Activated CD8-positive, alpha-beta T cell treated with anti-CD3 and anti-CD28 coated beads, Interleukin-2, amount 10 ng/mL, durations not matched to agents 7 days and 5 days (primary cell): ENCODE measurements at regions of chr15 and their contacts with region 1.

Region 1: DNA sequence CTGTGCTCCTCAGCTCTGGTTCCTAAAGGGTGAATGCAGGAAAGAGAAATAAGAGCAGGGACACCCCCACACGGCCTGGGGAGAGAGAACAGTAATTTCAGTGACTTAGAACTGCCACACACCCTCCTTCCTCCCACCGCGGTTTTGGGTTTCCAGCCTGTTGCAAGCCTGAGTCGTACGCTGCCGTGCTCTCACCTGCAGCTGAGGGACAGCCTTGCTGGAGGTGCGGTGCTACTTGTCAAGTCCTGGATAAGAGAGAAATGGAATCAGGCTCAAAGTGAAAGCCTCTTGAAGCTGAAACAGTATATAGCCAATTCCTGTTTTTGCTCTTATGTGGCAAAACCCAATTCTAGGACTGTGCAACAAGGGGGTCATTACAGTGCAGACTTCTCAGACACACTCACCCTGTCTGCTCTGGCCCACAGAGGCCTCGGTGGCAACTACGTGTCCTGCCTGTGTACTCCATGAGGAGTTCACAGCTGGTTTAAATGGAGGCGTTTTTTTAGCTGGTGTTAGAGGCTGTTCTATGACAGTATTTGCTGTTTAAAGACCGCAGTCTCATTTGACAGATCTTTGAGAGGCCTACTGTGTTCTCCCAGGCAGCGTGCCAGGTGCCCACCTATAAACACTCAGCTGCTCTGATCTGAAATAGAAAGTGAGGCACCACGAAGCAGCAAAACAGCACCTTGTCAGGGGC is 42.9 kb downstream of the TBC1D2B start:
- DNase-seq: peak; percentile 90
- ATAC-seq: peak; percentile 91
- H3K4me3 Mint-ChIP-seq: peak overlapping the region; percentile 64
- H3K27ac Mint-ChIP-seq: peak overlapping the region; percentile 79
- H3K4me1 Mint-ChIP-seq: peaks cover 88% of the 10 kb centered on the region
- H3K27me3 Mint-ChIP-seq: no peaks in the 10 kb centered on the region

Region 2: DNA sequence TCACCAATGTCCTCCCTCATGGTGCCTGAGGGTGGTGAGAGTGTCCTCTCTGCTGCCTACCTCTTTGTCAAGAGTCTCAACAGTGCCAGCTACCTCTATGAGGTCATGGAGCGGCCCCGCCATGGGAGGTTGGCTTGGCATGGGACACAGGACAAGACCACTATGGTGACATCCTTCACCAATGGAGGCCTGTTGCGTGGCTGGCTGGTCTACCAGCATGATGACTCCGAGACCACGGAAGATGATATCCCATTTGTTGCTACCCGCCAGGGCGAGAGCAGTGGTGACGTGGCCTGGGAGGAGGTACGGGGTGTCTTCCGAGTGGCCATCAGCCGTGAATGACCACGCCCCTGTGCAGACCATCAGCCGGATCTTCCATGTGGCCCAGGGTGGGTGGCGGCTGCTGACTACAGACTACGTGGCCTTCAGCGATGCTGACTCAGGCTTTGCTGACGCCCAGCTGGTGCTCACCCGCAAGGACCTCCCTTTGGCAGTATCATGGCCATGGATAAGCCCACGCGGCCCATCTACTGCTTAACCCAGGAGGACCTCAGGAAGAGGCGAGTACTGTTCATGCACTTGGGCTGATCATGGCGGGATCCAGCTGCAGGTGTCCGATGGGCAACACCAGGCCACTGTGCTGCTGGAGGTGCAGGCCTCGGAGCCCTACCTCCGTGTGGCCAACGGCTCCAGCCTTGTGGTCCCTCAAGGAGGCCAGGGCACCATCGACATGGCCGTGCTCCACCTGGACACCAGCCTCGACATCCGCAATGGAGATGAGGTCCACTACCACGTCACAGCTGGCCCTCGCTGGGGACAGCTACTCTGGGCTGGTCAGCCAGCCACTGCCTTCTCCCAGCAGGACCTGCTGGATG is 135.9 kb before region 1 on chr15:
- CTCF ChIA-PET with region 1: no interaction called
- POLR2A ChIA-PET with region 1: no interaction called
- DNase-seq: no peak
- ATAC-seq: no peak
- H3K4me3 Mint-ChIP-seq: no peak overlapping the region
- H3K27ac Mint-ChIP-seq: no peak overlapping the region
- H3K4me1 Mint-ChIP-seq: no peaks in the 10 kb centered on the region
- H3K27me3 Mint-ChIP-seq: no peaks in the 10 kb centered on the region

Region 3: DNA sequence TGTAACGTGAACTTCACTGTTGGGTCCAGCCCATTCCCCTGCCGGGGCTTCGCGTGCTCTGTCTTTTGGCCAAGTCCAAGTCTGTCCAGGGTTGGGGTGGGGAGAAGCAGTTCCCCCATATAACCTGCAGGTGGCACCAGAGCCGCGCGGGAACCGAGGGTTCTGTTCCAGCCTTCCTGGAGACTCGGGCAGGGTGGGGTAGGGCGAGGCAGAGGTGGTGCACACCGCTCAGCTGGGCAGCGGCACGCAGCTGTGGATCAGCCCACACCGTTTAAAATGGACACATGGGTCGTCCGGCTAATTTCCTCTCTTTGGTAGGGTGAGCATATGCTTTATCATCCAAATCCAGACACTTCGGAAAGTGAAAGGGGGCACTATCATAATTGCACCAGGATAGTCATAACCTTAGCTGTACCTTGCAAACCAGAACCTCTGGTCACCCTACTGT is 75.2 kb before region 1 on chr15:
- CTCF ChIA-PET with region 1: interaction called, 14 read pairs
- POLR2A ChIA-PET with region 1: no interaction called
- DNase-seq: peak; percentile 84
- ATAC-seq: peak; percentile 99
- H3K4me3 Mint-ChIP-seq: peak overlapping the region; percentile 39
- H3K27ac Mint-ChIP-seq: no peak overlapping the region
- H3K4me1 Mint-ChIP-seq: peaks cover 19% of the 10 kb centered on the region
- H3K27me3 Mint-ChIP-seq: peaks cover 27% of the 10 kb centered on the region

Region 4: DNA sequence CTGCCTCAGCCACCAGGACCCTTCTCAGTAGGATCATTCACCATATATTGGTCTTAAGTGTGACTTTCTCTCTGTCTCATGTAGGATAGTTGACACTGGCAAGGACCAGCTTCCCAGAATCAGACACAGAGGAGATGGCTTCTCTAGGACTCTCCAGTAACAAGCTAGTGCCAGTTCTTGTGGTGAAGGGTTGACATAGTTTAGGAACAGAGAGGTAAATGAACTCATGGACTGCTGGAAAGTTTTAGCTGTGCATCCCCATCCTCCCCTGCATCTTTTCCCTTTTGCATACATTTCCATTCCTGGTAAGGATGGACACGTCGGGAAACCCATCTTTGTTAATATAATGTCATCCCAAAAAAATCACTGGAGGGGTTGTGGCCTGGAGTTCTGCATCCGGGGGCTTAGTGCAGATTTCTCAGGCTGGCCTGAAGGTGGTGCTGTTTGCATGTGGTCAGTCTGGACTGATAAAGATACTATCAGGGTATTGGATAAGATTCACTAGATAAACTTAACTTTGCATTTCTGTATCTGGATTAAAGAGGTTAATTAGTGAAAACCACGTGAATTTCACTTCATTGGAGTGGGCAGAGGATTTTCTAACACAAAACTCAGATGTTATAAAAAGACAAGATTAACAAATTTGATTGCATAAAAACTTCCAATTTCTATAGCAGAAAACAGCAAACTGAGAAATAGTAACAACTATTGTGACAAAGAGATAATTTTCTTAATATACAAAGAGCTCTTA is 67.9 kb before region 1 on chr15:
- CTCF ChIA-PET with region 1: interaction called, 10 read pairs
- POLR2A ChIA-PET with region 1: no interaction called
- DNase-seq: peak; percentile 66
- ATAC-seq: peak; percentile 49
- H3K4me3 Mint-ChIP-seq: no peak overlapping the region
- H3K27ac Mint-ChIP-seq: no peak overlapping the region
- H3K4me1 Mint-ChIP-seq: peaks cover 17% of the 10 kb centered on the region
- H3K27me3 Mint-ChIP-seq: peaks cover 28% of the 10 kb centered on the region

Region 5: GRCh38 chr15:78018946-78019644 is 15.5 kb before region 1 on chr15:
- CTCF ChIA-PET with region 1: interaction called, 25 read pairs
- POLR2A ChIA-PET with region 1: interaction called, 6 read pairs
- DNase-seq: peak; percentile 60
- ATAC-seq: peak; percentile 88
- H3K4me3 Mint-ChIP-seq: peak overlapping the region; percentile 22
- H3K27ac Mint-ChIP-seq: peak overlapping the region; percentile 75
- H3K4me1 Mint-ChIP-seq: peaks cover 34% of the 10 kb centered on the region
- H3K27me3 Mint-ChIP-seq: no peaks in the 10 kb centered on the region

Region 6: DNA sequence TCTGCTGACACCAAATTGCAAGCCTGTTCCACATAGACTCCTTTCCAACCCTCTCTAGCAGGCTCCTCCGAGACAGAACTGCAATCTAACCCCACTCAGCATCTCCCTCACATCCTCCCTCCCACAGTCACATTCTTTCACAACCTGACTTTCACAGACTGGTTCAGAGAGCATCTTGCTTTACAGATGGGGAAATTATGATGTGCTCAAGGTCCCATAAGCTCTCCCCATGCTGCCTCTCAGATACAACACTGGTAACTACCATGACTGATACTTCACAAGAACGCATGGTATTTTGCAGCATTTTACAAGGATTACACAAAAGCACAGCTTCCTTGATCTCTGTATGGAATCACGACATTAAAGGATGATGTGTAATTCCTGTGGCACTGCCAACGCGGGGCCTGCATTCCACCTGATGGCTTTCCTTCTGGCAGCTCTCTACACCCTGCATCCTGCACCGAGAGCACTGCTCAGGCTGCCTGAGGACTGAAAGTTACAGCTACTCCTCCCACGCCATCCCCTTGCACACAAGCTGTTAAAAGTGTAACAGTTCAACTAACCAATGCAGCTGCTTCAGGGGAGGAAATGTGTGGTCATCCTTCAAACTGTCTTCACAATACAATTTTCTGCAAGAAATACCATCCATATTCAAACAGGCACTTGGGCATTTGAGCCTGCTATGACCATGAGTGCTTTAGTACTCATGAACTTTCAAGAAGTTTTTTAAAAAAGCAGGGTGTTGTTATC is 15.2 kb after region 1 on chr15:
- CTCF ChIA-PET with region 1: interaction called, 46 read pairs
- POLR2A ChIA-PET with region 1: interaction called, 53 read pairs
- DNase-seq: peak; percentile 80
- ATAC-seq: peak; percentile 80
- H3K4me3 Mint-ChIP-seq: peak overlapping the region; percentile 60
- H3K27ac Mint-ChIP-seq: peak overlapping the region; percentile 94
- H3K4me1 Mint-ChIP-seq: peaks cover 94% of the 10 kb centered on the region
- H3K27me3 Mint-ChIP-seq: no peaks in the 10 kb centered on the region

Region 7: GRCh38 chr15:78065284-78065872 is 30.7 kb after region 1 on chr15:
- CTCF ChIA-PET with region 1: interaction called, 64 read pairs
- POLR2A ChIA-PET with region 1: interaction called, 21 read pairs
- DNase-seq: no peak
- ATAC-seq: peak; percentile 18
- H3K4me3 Mint-ChIP-seq: no peak overlapping the region
- H3K27ac Mint-ChIP-seq: no peak overlapping the region
- H3K4me1 Mint-ChIP-seq: peaks cover 10% of the 10 kb centered on the region
- H3K27me3 Mint-ChIP-seq: no peaks in the 10 kb centered on the region

Region 8: GRCh38 chr15:78077058-78077877 is 42.6 kb after region 1 on chr15 and contains the start of gene TBC1D2B:
- CTCF ChIA-PET with region 1: interaction called, 64 read pairs
- POLR2A ChIA-PET with region 1: interaction called, 21 read pairs
- DNase-seq: peak; percentile 69
- ATAC-seq: peak; percentile 83
- H3K4me3 Mint-ChIP-seq: peak within 1 kb of the TSS; percentile 100
- H3K27ac Mint-ChIP-seq: peak within 1 kb of the TSS; percentile 94
- H3K4me1 Mint-ChIP-seq: peaks cover 50% of the 10 kb centered on the region
- H3K27me3 Mint-ChIP-seq: no peaks in the 10 kb centered on the region
- total RNA-seq, gene TBC1D2B: 109 to 119 TPM

Region 9: GRCh38 chr15:78120523-78120922 is 85.9 kb after region 1 on chr15:
- CTCF ChIA-PET with region 1: no interaction called
- POLR2A ChIA-PET with region 1: no interaction called
- DNase-seq: no peak
- ATAC-seq: no peak
- H3K4me3 Mint-ChIP-seq: no peak overlapping the region
- H3K27ac Mint-ChIP-seq: no peak overlapping the region
- H3K4me1 Mint-ChIP-seq: no peaks in the 10 kb centered on the region
- H3K27me3 Mint-ChIP-seq: no peaks in the 10 kb centered on the region